H1 (cell line): ENCODE measurements at regions of chr15 and their contacts with region 1.

Region 1: GRCh38 chr15:39801641-39802309 is 19.1 kb upstream of the FSIP1 start:
- DNase-seq: no peak
- H3K4me3 ChIP-seq: no peak overlapping the region
- H3K27ac ChIP-seq: no peak overlapping the region
- H3K4me1 ChIP-seq: peaks cover 0 to 3% (median 0%) of the 10 kb centered on the region in 4 experiments; a peak in 1 of 7 replicates
- H3K27me3 ChIP-seq: no peaks in the 10 kb centered on the region
- CTCF ChIP-seq: peak; percentile 39 to 70 (median 67)
- EP300 ChIP-seq: no peak
- POLR2A ChIP-seq: no peak
- RAD21 ChIP-seq: peak; percentile 66 to 68

Region 2: GRCh38 chr15:39782441-39783138 is 19.2 kb before region 1 on chr15 and contains the start of gene FSIP1:
- CTCF ChIA-PET with region 1: interaction called, 33 read pairs
- POLR2A ChIA-PET with region 1: interaction called, 3 read pairs
- DNase-seq: peak; percentile 76 to 99
- H3K4me3 ChIP-seq: peak within 1 kb of the TSS; percentile 73 to 97 (median 90)
- H3K27ac ChIP-seq: peak within 1 kb of the TSS; percentile 60
- H3K4me1 ChIP-seq: peaks cover 0 to 19% (median 13%) of the 10 kb centered on the region in 4 experiments; a peak in 5 of 7 replicates
- H3K27me3 ChIP-seq: no peaks in the 10 kb centered on the region
- CTCF ChIP-seq: no peak
- EP300 ChIP-seq: peak in 1 of 2 experiments; percentile 96; a peak in 2 of 3 replicates
- POLR2A ChIP-seq: peak in 1 of 2 experiments; percentile 80; a peak in 2 of 3 replicates
- RAD21 ChIP-seq: no peak
- total RNA-seq, gene FSIP1: 0.88 and 1.3 TPM in 2 replicates

Region 3: GRCh38 chr15:39788108-39788507 is 13.7 kb before region 1 on chr15:
- CTCF ChIA-PET with region 1: interaction called, 33 read pairs
- POLR2A ChIA-PET with region 1: interaction called, 14 read pairs
- DNase-seq: no peak
- H3K4me3 ChIP-seq: no peak overlapping the region
- H3K27ac ChIP-seq: no peak overlapping the region
- H3K4me1 ChIP-seq: peaks cover 2 to 29% (median 24%) of the 10 kb centered on the region in 4 experiments; a peak in 6 of 7 replicates
- H3K27me3 ChIP-seq: no peaks in the 10 kb centered on the region
- CTCF ChIP-seq: no peak
- EP300 ChIP-seq: no peak
- POLR2A ChIP-seq: no peak
- RAD21 ChIP-seq: no peak

Region 4: GRCh38 chr15:39823634-39824033 is 21.9 kb after region 1 on chr15:
- CTCF ChIA-PET with region 1: interaction called, 13 read pairs
- POLR2A ChIA-PET with region 1: no interaction called
- DNase-seq: no peak
- H3K4me3 ChIP-seq: no peak overlapping the region
- H3K27ac ChIP-seq: no peak overlapping the region
- H3K4me1 ChIP-seq: peaks cover 0 to 13% (median 4%) of the 10 kb centered on the region in 4 experiments; a peak in 3 of 7 replicates
- H3K27me3 ChIP-seq: no peaks in the 10 kb centered on the region
- CTCF ChIP-seq: peak in 1 of 3 experiments; percentile 29; a peak in 1 of 4 replicates
- EP300 ChIP-seq: no peak
- POLR2A ChIP-seq: no peak
- RAD21 ChIP-seq: peak in 1 of 2 experiments; percentile 29; a peak in 1 of 4 replicates

Region 5: GRCh38 chr15:39874890-39875549 is 73.2 kb after region 1 on chr15:
- CTCF ChIA-PET with region 1: interaction called, 11 read pairs
- POLR2A ChIA-PET with region 1: interaction called, 6 read pairs
- DNase-seq: no peak
- H3K4me3 ChIP-seq: no peak overlapping the region
- H3K27ac ChIP-seq: no peak overlapping the region
- H3K4me1 ChIP-seq: peaks cover 0 to 9% (median 2%) of the 10 kb centered on the region in 4 experiments; a peak in 5 of 7 replicates
- H3K27me3 ChIP-seq: no peaks in the 10 kb centered on the region
- CTCF ChIP-seq: peak in 2 of 3 experiments; percentile 45 to 56; a peak in 2 of 4 replicates
- EP300 ChIP-seq: no peak
- POLR2A ChIP-seq: no peak
- RAD21 ChIP-seq: peak; percentile 61 to 70

Region 6: DNA sequence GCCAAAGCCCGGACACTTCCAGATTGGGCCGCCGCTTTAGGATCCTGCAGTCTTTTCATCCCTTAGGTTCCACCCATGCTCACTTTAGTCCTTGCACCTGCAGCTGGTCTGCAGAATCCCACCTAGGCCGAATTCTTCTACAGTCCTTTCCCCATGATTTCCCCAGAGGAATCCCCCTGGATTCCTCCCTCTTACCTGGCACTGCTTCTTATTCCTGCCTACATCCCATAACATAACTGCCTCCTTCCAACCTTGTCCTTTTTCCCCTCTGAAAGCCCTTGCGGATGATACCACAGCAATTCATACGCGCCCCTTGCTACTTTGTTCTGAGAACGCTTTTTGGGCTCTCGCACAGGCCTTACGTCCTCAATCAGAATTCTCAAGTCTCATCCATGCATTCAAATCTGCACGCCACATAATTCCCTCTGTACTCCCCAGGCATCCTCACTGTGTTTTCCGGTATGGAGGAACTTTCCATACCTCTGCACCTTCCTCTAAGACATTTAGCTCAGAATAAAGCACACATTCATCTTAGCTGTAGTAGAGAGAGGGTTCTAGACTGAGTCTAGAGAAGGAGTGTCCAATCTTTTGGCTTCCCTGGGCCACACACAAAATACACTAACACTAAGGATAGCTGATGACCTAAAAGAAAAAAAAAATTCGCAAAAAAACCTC is 132.8 kb after region 1 on chr15:
- CTCF ChIA-PET with region 1: interaction called, 11 read pairs
- POLR2A ChIA-PET with region 1: interaction called, 14 read pairs
- DNase-seq: no peak
- H3K4me3 ChIP-seq: peak overlapping the region; percentile 62 to 91 (median 76)
- H3K27ac ChIP-seq: peak overlapping the region; percentile 70; the same call in 1 of the 2 replicates
- H3K4me1 ChIP-seq: peaks cover 0 to 8% (median 2%) of the 10 kb centered on the region in 4 experiments; a peak in 4 of 7 replicates
- H3K27me3 ChIP-seq: no peaks in the 10 kb centered on the region
- CTCF ChIP-seq: no peak
- EP300 ChIP-seq: no peak
- POLR2A ChIP-seq: peak in 1 of 2 experiments; percentile 59; a peak in 2 of 3 replicates
- RAD21 ChIP-seq: no peak